Spleen (tissue), 13 donors: ENCODE measurements at regions of chr4 and their contacts with region 1.

Region 1: DNA sequence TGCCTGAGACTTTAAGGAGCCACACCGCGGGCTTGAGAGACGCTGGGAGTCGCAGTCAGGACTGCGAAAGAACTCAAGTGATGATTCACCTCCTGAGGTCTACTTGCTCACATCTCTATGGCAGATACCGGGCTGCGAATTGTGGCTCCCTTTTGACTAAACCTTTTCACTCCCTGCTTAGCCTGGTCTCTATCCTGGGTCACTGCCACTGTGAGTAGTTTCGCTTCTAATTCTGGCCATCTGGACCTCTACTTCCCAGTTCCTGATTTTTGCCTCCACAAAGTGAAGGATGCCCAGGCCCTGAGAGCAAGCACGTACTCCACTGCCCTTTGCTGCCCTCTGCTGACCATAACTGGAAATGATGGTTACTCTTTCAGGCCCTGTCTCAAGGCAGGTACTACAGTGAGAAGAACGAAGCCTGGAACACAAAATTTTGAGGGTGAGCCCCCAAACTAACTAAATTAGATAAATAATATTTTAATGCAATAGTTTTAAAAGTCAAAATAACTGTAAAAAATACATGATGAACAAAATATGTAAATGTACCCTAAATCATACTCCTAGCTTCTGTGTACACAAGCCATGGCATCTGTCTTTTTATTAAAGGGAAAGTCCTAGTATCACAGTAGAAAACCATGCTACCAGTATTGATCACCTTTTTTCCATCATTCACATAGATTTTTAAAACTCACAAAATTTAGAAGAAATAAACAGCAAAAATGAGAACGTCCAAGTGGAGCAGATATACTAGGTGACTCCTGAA is 16.7 kb downstream of the MAD2L1 start:
- DNase-seq: peak; percentile 73
- H3K4me3 ChIP-seq: peak overlapping the region in 1 of 8 donors; percentile 39
- H3K27ac ChIP-seq: peak overlapping the region in 2 of 8 donors; percentile 31 to 47
- H3K4me1 ChIP-seq: peaks cover 0 to 32% (median 20%) of the 10 kb centered on the region in 6 donors
- H3K27me3 ChIP-seq: no peaks in the 10 kb centered on the region
- CTCF ChIP-seq: peak; percentile 47 to 84 (median 78)
- POLR2A ChIP-seq: no peak

Region 2: DNA sequence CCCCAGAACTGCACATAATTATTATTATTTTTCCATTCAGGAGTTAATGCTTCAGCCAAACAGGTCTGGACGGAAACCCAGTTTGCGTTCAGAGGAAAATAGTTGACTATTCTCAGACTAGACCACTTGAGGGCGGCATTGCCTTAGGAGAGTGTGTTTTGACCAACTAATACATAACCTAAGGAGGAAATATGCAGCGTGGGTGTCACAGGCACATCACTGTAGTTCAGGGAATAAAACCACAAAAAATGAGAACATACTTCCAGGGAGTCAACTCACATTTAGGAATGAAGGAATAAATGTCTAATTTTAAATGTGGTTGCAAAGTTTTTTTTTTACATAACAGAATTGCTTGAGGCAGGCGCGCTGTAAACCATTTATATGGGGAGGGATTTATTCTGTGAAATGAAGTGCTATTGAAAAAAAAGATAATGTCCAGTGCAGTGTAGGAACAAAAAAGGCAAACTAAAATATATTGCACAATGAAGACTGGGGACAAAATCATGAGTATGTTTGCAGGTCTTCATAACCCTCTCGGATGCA is 1068.0 kb before region 1 on chr4:
- intact Hi-C with region 1: loop called (anchors 10 kb)
- DNase-seq: no peak
- H3K4me3 ChIP-seq: no peak overlapping the region
- H3K27ac ChIP-seq: peak overlapping the region in 2 of 8 donors; percentile 10 to 17
- H3K4me1 ChIP-seq: peaks cover 0 to 19% (median 6%) of the 10 kb centered on the region in 6 donors
- H3K27me3 ChIP-seq: no peaks in the 10 kb centered on the region
- CTCF ChIP-seq: peak; percentile 25 to 69 (median 58)
- POLR2A ChIP-seq: no peak

Region 3: GRCh38 chr4:119314356-119314755 is 735.6 kb before region 1 on chr4:
- intact Hi-C with region 1: loop called (anchors 5 kb)
- DNase-seq: no peak
- H3K4me3 ChIP-seq: no peak overlapping the region
- H3K27ac ChIP-seq: peak overlapping the region in 1 of 8 donors; percentile 51
- H3K4me1 ChIP-seq: peaks cover 0 to 23% (median 5%) of the 10 kb centered on the region in 6 donors
- H3K27me3 ChIP-seq: peaks cover 0 to 12% (median 0%) of the 10 kb centered on the region in 7 donors
- CTCF ChIP-seq: peak; percentile 18 to 73 (median 53)
- POLR2A ChIP-seq: no peak

Region 4: GRCh38 chr4:119559044-119559647 is 490.8 kb before region 1 on chr4:
- intact Hi-C with region 1: no loop called
- DNase-seq: no peak
- H3K4me3 ChIP-seq: no peak overlapping the region
- H3K27ac ChIP-seq: no peak overlapping the region
- H3K4me1 ChIP-seq: no peaks in the 10 kb centered on the region
- H3K27me3 ChIP-seq: no peaks in the 10 kb centered on the region
- CTCF ChIP-seq: peak in 6 of 11 experiments; percentile 15 to 45 (median 28)
- POLR2A ChIP-seq: no peak

Region 5: DNA sequence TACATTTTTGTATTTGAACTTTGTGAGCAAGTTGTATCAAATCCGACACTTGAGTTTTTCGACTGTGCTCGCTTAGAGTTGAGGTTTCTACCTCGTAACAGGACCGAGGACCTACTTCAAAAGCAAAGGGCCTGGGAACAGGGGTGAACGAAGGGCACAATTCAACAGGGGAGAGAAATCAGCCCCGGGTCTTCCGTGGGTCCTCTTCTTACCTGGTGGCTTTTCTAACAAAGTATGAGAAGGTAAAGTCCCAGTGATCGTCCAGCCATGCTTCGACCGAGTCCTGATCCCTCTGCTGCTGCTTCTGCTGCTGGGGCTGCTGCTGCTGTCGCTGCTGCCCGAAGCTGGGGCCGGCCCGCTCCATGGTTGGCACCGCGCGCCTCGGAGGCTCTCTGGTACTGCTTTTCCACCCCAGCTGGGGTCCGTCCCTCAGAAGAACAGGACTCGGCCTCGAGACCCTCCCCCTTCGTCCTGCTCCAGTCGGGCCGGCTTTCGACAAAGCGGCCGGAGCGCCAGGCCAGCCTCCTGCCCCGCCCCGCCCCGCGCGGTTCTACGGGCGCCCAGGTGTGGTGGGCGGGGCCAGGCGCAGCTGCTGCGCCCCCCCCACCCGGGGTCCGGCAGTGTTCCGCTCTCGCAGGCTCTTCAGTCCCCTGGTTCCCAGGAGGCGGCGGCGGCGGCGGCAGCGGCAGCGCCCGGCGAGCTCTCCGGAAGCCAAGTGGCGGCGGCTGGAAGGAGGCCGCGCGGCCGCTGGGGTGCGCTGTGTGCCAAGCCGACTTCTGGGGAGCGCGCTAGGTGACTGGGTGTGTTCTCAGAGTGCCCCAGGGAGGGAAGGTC is 421.4 kb before region 1 on chr4 and contains the start of gene PDE5A:
- intact Hi-C with region 1: loop called (anchors 10 kb)
- DNase-seq: peak; percentile 95
- H3K4me3 ChIP-seq: peak within 1 kb of the TSS; percentile 63 to 83 (median 76)
- H3K27ac ChIP-seq: peak within 1 kb of the TSS; percentile 49 to 81 (median 80)
- H3K4me1 ChIP-seq: peaks cover 0 to 34% (median 26%) of the 10 kb centered on the region in 6 donors
- H3K27me3 ChIP-seq: peaks cover 0 to 73% (median 5%) of the 10 kb centered on the region in 7 donors
- CTCF ChIP-seq: peak in 10 of 11 experiments; percentile 37 to 92 (median 80)
- POLR2A ChIP-seq: no peak
- total RNA-seq, gene PDE5A: 8.8 to 15.1 (median 9.6) TPM

Region 6: DNA sequence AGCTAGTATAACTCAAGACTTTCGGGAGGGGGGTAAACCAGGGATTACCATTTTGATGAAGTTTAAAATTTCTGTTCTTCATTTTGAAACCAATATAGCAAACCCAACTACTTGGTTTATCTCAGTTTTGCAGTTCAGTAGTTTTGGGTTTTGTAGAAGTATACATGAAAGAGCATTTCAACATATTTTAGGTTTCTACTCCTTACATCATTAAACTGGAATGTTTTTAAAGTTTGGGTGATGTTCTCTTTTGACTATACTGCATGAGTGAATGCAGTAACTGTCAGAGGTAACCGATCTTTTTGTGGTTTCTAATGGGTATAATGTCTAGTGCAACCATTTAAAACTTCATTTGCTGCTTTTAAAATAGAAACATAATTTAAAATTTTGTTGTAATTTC is 265.1 kb after region 1 on chr4:
- intact Hi-C with region 1: no loop called
- DNase-seq: no peak
- H3K4me3 ChIP-seq: no peak overlapping the region
- H3K27ac ChIP-seq: no peak overlapping the region
- H3K4me1 ChIP-seq: no peaks in the 10 kb centered on the region
- H3K27me3 ChIP-seq: no peaks in the 10 kb centered on the region
- CTCF ChIP-seq: no peak
- POLR2A ChIP-seq: no peak

Region 7: GRCh38 chr4:121122661-121123060 is 1072.7 kb after region 1 on chr4:
- intact Hi-C with region 1: no loop called
- DNase-seq: no peak
- H3K4me3 ChIP-seq: no peak overlapping the region
- H3K27ac ChIP-seq: no peak overlapping the region
- H3K4me1 ChIP-seq: no peaks in the 10 kb centered on the region
- H3K27me3 ChIP-seq: no peaks in the 10 kb centered on the region
- CTCF ChIP-seq: no peak
- POLR2A ChIP-seq: no peak